Ovary (tissue), 10 donors: ENCODE measurements at regions of chr12 and their contacts with region 1.

Region 1: GRCh38 chr12:121334513-121335343 is 17.5 kb downstream of the ANAPC5 start:
- DNase-seq: no peak
- H3K4me3 ChIP-seq: no peak overlapping the region
- H3K27ac ChIP-seq: no peak overlapping the region
- H3K4me1 ChIP-seq: no peaks in the 10 kb centered on the region
- H3K27me3 ChIP-seq: no peaks in the 10 kb centered on the region
- CTCF ChIP-seq: peak; percentile 57 to 67 (median 57)
- EP300 ChIP-seq: no peak
- POLR2A ChIP-seq: no peak

Region 2: DNA sequence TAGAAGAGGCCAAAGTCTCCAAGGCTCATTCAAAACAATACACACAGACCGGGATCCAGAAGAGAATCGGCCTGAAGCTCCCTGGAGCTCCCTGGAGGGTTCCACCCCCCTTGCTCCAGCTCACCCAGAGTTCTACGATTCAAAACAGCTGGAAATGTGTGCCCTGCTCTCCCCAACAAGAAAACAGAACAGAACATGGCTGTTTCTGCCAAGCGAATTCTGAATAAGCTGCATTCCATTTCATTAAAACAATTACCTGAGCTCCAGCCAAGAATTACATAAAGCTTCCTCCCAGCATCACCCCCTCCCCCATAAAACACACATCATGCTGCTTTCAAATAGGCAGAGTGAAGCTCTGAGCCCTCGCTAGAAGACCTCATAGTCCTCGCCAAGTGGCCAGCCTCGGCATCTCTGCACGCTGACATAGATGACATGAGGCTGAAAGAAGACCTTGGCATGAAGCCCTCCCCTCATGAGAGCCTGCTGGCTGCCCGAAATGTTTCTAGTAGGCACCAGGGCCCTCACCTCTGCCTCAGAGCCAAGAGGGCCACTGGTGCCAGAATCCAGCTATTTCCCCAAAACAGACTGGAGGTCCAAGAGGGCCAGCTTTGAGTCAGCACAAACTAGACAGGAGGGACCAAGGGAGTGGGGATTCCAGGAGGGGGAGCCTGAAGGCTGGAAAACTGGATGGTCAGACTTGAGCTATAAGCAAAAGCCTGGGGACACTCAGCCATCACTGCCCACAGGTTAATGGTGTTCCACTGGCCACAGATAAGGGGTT is 1077.5 kb before region 1 on chr12:
- intact Hi-C with region 1: loop called in 1 of 4 experiments (anchors 5 kb)
- DNase-seq: peak; percentile 55 to 73 (median 59)
- H3K4me3 ChIP-seq: no peak overlapping the region
- H3K27ac ChIP-seq: peak overlapping the region; percentile 31 to 60
- H3K4me1 ChIP-seq: peaks cover 12% of the 10 kb centered on the region
- H3K27me3 ChIP-seq: no peaks in the 10 kb centered on the region
- CTCF ChIP-seq: no peak
- EP300 ChIP-seq: no peak
- POLR2A ChIP-seq: no peak

Region 3: GRCh38 chr12:121376754-121377697 is 42.3 kb after region 1 on chr12:
- intact Hi-C with region 1: no loop called
- DNase-seq: no peak
- H3K4me3 ChIP-seq: no peak overlapping the region
- H3K27ac ChIP-seq: no peak overlapping the region
- H3K4me1 ChIP-seq: no peaks in the 10 kb centered on the region
- H3K27me3 ChIP-seq: no peaks in the 10 kb centered on the region
- CTCF ChIP-seq: no peak
- EP300 ChIP-seq: no peak
- POLR2A ChIP-seq: no peak

Region 4: GRCh38 chr12:121443193-121443870 is 108.6 kb after region 1 on chr12:
- intact Hi-C with region 1: loop called in 1 of 4 experiments (anchors 10 kb)
- DNase-seq: peak; percentile 69 to 87 (median 80)
- H3K4me3 ChIP-seq: no peak overlapping the region
- H3K27ac ChIP-seq: no peak overlapping the region
- H3K4me1 ChIP-seq: peaks cover 4% of the 10 kb centered on the region
- H3K27me3 ChIP-seq: no peaks in the 10 kb centered on the region
- CTCF ChIP-seq: peak; percentile 49 to 67 (median 50)
- EP300 ChIP-seq: no peak
- POLR2A ChIP-seq: no peak